ENCODE measurements at regions of chr1 and their contacts with region 1.

Region 1: GRCh38 chr1:85259118-85259911 is at the start of gene C1orf52:
- DNase-seq: peak; percentile 88
- H3K4me3 Mint-ChIP-seq: peak within 1 kb of the TSS; percentile 88
- H3K27ac Mint-ChIP-seq: peak within 1 kb of the TSS; percentile 97
- H3K4me1 Mint-ChIP-seq: peaks cover 31% of the 10 kb centered on the region
- H3K27me3 Mint-ChIP-seq: no peaks in the 10 kb centered on the region
- CTCF ChIP-seq: peak; percentile 85
- total RNA-seq, gene C1orf52: 29.6 and 31.7 TPM in 2 replicates

Region 2: GRCh38 chr1:84936116-84936810 is 323.1 kb before region 1 on chr1:
- CTCF ChIA-PET with region 1: interaction called, 111 read pairs
- POLR2A ChIA-PET with region 1: no interaction called
- intact Hi-C with region 1: no loop called
- DNase-seq: peak; percentile 78
- H3K4me3 Mint-ChIP-seq: no peak overlapping the region
- H3K27ac Mint-ChIP-seq: no peak overlapping the region
- H3K4me1 Mint-ChIP-seq: no peaks in the 10 kb centered on the region
- H3K27me3 Mint-ChIP-seq: no peaks in the 10 kb centered on the region
- CTCF ChIP-seq: peak; percentile 89

Region 3: GRCh38 chr1:85091671-85092280 is 167.5 kb before region 1 on chr1:
- CTCF ChIA-PET with region 1: interaction called, 10 read pairs
- POLR2A ChIA-PET with region 1: interaction called, 4 read pairs
- intact Hi-C with region 1: no loop called
- DNase-seq: peak; percentile 39
- H3K4me3 Mint-ChIP-seq: no peak overlapping the region
- H3K27ac Mint-ChIP-seq: peak overlapping the region; percentile 46
- H3K4me1 Mint-ChIP-seq: peaks cover 11% of the 10 kb centered on the region
- H3K27me3 Mint-ChIP-seq: no peaks in the 10 kb centered on the region
- CTCF ChIP-seq: no peak

Region 4: GRCh38 chr1:85134576-85135395 is 124.5 kb before region 1 on chr1:
- CTCF ChIA-PET with region 1: interaction called, 11 read pairs
- POLR2A ChIA-PET with region 1: interaction called, 10 read pairs
- intact Hi-C with region 1: no loop called
- DNase-seq: peak; percentile 72
- H3K4me3 Mint-ChIP-seq: no peak overlapping the region
- H3K27ac Mint-ChIP-seq: no peak overlapping the region
- H3K4me1 Mint-ChIP-seq: no peaks in the 10 kb centered on the region
- H3K27me3 Mint-ChIP-seq: no peaks in the 10 kb centered on the region
- CTCF ChIP-seq: no peak

Region 5: DNA sequence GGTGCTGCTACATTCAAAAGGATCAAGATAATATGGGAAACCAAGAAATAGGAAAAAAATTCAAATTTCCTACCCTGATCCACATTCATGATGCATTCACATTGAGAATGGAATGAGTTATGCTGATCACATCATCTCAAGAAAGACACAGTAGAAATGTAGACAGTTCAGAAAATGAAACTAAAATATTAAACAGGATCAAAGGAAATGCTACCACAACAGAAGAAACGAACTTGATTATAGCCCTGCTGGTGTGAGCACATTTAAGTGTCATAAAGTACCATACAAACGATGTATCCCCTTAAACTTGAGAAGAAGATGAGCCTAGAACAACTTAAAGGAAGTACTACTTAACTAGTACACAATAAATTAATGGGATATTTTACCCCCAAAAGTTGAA is 79.8 kb before region 1 on chr1:
- CTCF ChIA-PET with region 1: no interaction called
- POLR2A ChIA-PET with region 1: no interaction called
- intact Hi-C with region 1: no loop called
- DNase-seq: no peak
- H3K4me3 Mint-ChIP-seq: no peak overlapping the region
- H3K27ac Mint-ChIP-seq: no peak overlapping the region
- H3K4me1 Mint-ChIP-seq: peaks cover 5% of the 10 kb centered on the region
- H3K27me3 Mint-ChIP-seq: no peaks in the 10 kb centered on the region
- CTCF ChIP-seq: no peak

Region 6: GRCh38 chr1:85240174-85240601 is 19.1 kb before region 1 on chr1:
- CTCF ChIA-PET with region 1: interaction called, 15 read pairs
- POLR2A ChIA-PET with region 1: interaction called, 6 read pairs
- intact Hi-C with region 1: no loop called
- DNase-seq: peak; percentile 46
- H3K4me3 Mint-ChIP-seq: no peak overlapping the region
- H3K27ac Mint-ChIP-seq: no peak overlapping the region
- H3K4me1 Mint-ChIP-seq: peaks cover 11% of the 10 kb centered on the region
- H3K27me3 Mint-ChIP-seq: no peaks in the 10 kb centered on the region
- CTCF ChIP-seq: peak; percentile 40

Region 7: DNA sequence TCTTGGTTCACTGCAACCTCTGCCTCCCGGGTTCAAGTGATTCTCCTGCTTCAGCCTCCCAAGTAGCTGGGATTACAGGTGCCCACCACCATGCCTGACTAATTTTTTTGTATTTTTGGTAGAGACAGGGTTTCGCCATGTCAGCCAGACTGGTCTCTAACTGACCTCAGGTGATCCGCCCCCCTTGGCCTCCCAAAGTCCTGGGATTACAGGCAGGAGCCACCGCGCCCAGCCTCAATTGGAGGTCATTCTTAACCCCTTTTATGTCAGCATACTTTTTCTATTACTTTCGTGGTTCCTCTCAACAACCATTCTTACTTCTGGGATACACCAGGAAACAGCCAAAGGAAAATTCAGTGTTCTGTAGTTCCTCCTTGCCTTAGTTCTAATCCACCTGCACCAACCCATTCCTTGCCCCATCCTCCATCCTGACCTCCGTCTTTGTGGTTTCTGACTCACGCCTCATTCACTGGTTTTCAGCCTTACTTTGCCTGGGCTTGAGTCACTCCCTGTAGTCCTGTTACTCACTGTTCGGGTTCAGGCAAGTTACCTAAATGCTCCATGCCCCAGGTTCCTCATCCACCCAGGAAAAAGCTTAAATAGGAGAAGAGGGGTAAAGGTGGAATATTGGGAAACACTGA is 30.0 kb after region 1 on chr1:
- CTCF ChIA-PET with region 1: interaction called, 6 read pairs
- POLR2A ChIA-PET with region 1: interaction called, 19 read pairs
- intact Hi-C with region 1: no loop called
- DNase-seq: peak; percentile 98
- H3K4me3 Mint-ChIP-seq: peak overlapping the region; percentile 6
- H3K27ac Mint-ChIP-seq: peak overlapping the region; percentile 69
- H3K4me1 Mint-ChIP-seq: peaks cover 24% of the 10 kb centered on the region
- H3K27me3 Mint-ChIP-seq: no peaks in the 10 kb centered on the region
- CTCF ChIP-seq: no peak

Region 8: GRCh38 chr1:85692730-85693314 is 433.5 kb after region 1 on chr1:
- CTCF ChIA-PET with region 1: interaction called, 15 read pairs
- POLR2A ChIA-PET with region 1: interaction called, 3 read pairs
- intact Hi-C with region 1: no loop called
- DNase-seq: peak; percentile 52
- H3K4me3 Mint-ChIP-seq: no peak overlapping the region
- H3K27ac Mint-ChIP-seq: peak overlapping the region; percentile 65
- H3K4me1 Mint-ChIP-seq: peaks cover 10% of the 10 kb centered on the region
- H3K27me3 Mint-ChIP-seq: no peaks in the 10 kb centered on the region
- CTCF ChIP-seq: peak; percentile 60